ENCODE measurements at regions of chr7 and their contacts with region 1.

Region 1: GRCh38 chr7:23273141-23273599 is 26.0 kb upstream of the MALSU1 start:
- DNase-seq: peak; percentile 91

Region 2: DNA sequence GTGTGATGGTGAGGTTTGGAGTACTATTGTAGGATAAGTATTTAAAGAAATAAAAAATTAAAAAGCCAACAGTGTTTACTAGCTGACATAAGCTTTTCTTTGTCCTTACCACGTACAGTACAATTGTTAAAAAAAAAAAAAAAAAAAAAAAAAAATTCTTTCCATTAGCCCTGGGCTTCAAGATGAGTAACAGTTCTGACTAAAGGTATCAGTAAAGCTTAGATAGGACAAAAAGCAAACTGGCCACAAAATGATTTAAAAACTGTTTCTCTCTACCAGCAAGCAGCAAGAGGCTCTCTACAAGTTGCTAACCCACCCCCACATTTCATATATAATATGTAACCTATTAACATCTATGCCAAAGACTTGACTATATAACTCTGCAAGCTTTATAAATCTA is 276.7 kb before region 1 on chr7:
- intact Hi-C with region 1: no loop called
- DNase-seq: no peak

Region 3: DNA sequence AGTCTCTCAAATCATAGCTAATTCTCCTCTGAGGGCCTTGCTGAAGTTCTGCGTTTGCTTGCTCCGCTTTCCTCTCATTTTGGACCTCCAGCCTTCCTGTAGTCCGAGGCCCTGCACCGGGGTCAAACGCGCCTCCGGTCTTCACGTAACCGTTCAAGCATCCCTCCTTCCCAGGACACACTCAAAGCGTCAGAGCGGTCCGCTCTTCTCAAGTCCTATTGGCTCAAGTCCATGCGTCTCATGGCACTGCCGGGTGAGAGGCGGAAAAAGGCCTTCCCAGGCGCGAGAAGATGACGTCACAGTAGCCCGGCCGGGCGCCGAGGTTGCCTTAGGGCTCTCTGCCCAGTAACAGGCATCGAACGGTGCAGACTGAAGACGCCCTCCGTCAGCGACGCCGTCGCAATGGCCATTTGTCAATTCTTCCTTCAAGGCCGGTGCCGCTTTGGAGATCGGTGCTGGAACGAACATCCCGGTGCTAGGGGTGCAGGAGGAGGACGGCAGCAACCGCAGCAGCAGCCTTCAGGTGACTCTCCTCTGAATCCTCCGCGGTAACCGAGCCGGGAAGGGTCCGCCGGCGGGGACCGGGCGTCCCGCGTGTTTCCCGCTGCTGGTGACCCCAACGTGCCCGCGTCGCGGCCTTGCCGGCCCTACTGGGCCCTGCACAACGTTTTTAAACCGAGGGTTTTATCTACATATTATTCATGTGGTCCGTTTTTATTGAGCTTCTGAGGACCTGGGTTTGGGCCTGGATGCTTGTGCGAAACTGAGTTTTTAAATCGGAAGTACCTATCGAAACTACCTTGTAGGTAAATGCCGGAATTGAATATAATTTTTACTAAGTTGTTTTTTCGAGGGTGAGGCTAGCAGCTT is 91.3 kb before region 1 on chr7 and contains the start of gene NUP42:
- intact Hi-C with region 1: no loop called
- DNase-seq: peak; percentile 97
- total RNA-seq, gene NUP42: 24.0 TPM

Region 4: DNA sequence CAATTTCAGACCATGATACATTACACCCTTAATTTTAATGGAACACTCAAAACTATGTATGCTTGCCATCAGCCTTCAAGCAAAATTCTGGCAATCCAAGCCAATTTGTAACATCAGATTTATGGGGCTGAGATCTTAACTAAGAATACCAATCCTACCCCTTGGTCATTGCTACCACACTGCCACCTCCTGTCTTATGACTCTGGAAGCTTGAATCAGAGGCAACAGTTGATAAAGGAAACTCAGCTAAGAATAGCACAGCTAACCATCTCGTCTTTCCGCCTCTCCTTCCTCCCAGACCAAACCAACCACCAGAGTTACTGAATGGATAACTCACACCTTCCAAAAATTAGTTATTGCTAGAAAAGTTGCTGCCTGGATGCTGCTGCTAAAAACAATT is 189.7 kb after region 1 on chr7:
- intact Hi-C with region 1: loop called (anchors 5 kb)
- DNase-seq: no peak

Region 5: DNA sequence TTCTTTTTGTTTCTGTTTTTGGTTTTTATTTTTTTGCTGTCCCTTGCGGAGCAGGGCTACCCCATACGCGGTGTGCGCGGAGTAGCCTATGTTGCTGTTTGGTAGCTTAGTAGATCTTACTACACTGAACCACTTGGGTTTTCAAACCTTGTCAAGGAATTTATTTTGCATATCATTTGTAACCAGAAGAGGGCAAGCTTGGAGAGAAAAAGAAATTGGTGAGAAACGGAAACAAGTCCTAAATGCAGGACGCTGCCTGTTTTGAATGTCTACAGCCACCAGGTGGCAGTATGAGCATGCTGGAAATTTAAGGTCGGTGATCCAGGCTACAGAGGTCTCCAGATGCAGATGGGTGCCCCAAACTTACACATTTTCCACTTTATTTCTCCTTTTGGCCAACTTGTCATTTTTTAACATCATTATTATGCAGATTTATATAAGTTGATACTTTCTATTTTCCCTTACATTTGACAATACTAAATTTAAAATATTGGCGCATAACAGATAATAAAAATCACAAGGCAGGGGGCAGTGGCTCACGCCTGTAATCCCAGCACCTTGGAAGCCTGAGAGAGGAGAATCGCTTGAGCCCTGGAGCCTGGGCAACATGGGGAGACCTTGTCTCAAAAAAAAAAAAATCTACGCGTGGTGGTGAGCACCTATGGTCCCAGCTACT is 273.9 kb after region 1 on chr7:
- intact Hi-C with region 1: loop called (anchors 10 kb)
- DNase-seq: no peak